GM12878 (cell line): ENCODE measurements at regions of chr12 and their contacts with region 1.

Region 1: DNA sequence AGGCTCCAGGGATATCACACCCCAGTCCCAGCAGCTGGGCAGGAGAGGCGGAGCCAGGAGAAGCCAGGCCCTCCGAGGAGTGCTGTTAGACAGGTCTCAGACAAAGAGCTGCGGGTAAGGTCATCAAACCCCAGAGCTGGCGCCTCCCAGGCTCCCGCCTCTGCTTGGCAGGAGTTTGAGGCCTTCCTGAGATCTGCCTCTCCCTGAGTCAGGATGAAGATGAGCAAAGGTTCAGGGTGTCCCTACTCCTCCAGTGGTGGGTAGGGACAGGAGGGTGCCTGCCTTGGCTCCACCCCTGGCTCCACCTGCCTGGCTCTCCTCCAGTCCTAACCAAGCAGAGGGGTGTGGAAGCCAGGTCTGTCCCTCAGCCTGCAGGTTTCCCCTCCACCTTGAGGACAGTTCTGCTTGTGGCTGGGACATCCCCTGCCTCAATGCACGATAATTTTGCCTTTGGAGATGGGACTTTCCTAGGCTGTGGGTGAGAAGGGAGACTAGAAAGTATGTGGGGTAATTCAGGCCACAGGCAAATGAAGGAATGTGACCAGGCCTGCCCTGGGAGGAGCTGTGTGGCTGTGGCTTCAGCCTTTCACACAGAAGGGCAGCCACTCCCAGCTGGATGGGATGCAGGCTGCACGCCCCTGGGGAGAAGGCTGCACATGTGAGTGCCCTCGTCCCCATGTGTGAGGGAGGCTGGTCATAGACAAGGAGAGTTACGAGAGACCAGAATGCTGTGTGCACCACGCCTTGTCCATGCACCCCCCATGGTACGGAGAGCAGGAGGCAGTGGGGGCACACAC is 2.2 kb downstream of the PLEKHG6 start:
- DNase-seq: peak; percentile 94
- ATAC-seq: peak; percentile 89
- H3K4me3 ChIP-seq: no peak overlapping the region
- H3K27ac ChIP-seq: peak overlapping the region; percentile 57
- H3K4me1 ChIP-seq: peaks cover 45% of the 10 kb centered on the region
- H3K27me3 ChIP-seq: no peaks in the 10 kb centered on the region
- CTCF ChIP-seq: no peak
- EP300 ChIP-seq: peak; percentile 72 to 74; a peak in 2 of 4 replicates
- POLR2A ChIP-seq: no peak
- RAD21 ChIP-seq: no peak

Region 2: GRCh38 chr12:6323340-6323994 is 10.7 kb after region 1 on chr12:
- CTCF ChIA-PET with region 1: interaction called, 13 read pairs
- POLR2A ChIA-PET with region 1: interaction called, 14 read pairs
- RAD21 ChIA-PET with region 1: interaction called, 14 read pairs
- SMC1A ChIA-PET with region 1: interaction called, 6 read pairs
- in situ Hi-C with region 1: no loop called
- intact Hi-C with region 1: no loop called
- DNase-seq: peak; percentile 71
- ATAC-seq: peak; percentile 87
- H3K4me3 ChIP-seq: no peak overlapping the region
- H3K27ac ChIP-seq: peak overlapping the region; percentile 79
- H3K4me1 ChIP-seq: peaks cover 31% of the 10 kb centered on the region
- H3K27me3 ChIP-seq: no peaks in the 10 kb centered on the region
- CTCF ChIP-seq: peak; percentile 38 to 45 (median 45); a peak in 5 of 6 replicates
- EP300 ChIP-seq: peak; percentile 46 to 53; a peak in 1 of 4 replicates
- POLR2A ChIP-seq: 0 out of 2 replicates have a peak, but pooled peaks have one; percentile 18
- RAD21 ChIP-seq: peak; percentile 34

Region 3: DNA sequence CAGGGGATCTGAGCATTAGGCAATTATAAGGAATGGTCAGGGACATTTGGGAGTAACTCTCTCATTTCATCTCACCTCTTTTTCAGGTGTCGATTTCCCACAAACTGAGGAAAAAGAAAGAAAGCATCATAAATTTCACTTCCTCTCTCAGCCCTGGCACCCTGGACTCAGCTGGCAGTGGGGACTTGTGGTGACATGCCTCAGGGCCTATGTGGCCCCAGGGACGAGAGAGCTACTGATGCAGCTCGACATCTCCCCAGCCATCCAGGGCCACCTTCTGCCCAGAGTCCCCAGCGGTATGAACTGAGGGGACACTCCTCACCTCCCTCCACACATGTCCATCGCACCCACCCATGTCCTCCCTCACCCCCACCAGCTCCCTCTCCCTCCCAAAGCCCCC is 17.5 kb after region 1 on chr12:
- CTCF ChIA-PET with region 1: interaction called, 7 read pairs
- POLR2A ChIA-PET with region 1: interaction called, 11 read pairs
- RAD21 ChIA-PET with region 1: interaction called, 4 read pairs
- SMC1A ChIA-PET with region 1: interaction called, 6 read pairs
- in situ Hi-C with region 1: no loop called
- intact Hi-C with region 1: no loop called
- DNase-seq: peak; percentile 68
- ATAC-seq: peak; percentile 95
- H3K4me3 ChIP-seq: no peak overlapping the region
- H3K27ac ChIP-seq: peak overlapping the region; percentile 55
- H3K4me1 ChIP-seq: peaks cover 21% of the 10 kb centered on the region
- H3K27me3 ChIP-seq: no peaks in the 10 kb centered on the region
- CTCF ChIP-seq: no peak
- EP300 ChIP-seq: no peak
- POLR2A ChIP-seq: no peak
- RAD21 ChIP-seq: no peak

Region 4: GRCh38 chr12:6383572-6384498 is 71.1 kb after region 1 on chr12 and contains the start of gene LTBR:
- CTCF ChIA-PET with region 1: no interaction called
- POLR2A ChIA-PET with region 1: no interaction called
- RAD21 ChIA-PET with region 1: no interaction called
- SMC1A ChIA-PET with region 1: no interaction called
- in situ Hi-C with region 1: no loop called
- intact Hi-C with region 1: no loop called
- DNase-seq: no peak
- ATAC-seq: peak; percentile 19; the same call in 2 of the 3 replicates
- H3K4me3 ChIP-seq: peak within 1 kb of the TSS; percentile 27; the same call in 1 of the 2 replicates
- H3K27ac ChIP-seq: no peak within 1 kb of the TSS
- H3K4me1 ChIP-seq: no peaks in the 10 kb centered on the region
- H3K27me3 ChIP-seq: peaks cover 13 to 15% of the 10 kb centered on the region in 2 experiments; a peak in 3 of 4 replicates
- CTCF ChIP-seq: no peak
- EP300 ChIP-seq: no peak
- POLR2A ChIP-seq: no peak
- RAD21 ChIP-seq: no peak
- polyA plus RNA-seq, gene LTBR: not detected